Activated CD8-positive, alpha-beta T cell treated with anti-CD3 and anti-CD28 coated beads, Interleukin-2, amount 10 ng/mL, durations not matched to agents 7 days and 5 days (primary cell): ENCODE measurements at regions of chr7 and their contacts with region 1.

Region 1: DNA sequence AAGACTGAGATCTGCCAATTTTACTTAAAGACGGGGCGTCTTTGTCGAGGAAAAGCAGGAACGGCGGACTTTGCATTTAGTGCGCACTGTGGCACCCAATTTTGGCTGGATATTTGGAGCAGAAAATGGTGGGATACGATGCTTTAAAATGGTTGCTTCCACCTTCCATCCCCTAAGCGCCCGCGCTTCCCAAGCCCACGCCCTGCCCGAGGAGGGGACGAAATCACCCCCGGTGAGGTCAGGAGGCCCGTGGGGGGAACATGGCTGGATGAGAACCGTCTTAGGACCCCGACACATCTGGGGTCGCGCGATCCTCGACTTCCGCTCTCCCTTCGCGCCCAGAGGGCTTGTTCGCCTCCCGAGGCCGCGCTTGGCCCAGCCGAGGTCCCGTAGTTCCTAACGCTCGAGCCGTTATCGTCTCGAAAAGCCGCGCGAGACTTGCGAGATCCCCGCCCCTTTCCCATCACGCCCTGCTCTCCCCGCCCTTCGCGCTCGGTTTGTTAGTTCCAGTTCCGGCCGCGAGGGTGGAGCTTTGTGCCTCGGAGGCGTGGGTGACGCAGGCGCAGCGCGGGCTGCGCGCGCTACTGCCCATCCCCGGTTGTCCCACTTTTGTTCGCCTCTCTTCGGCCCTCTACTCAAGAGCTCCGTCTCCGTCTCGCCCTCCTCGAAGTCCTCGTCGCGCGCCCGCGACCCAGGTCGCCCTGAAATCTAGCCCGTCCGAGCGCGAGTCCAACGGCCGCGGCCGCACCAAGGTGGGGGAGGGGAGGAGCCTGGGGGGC is at the start of gene SRRT:
- DNase-seq: peak; percentile 99
- ATAC-seq: peak; percentile 93
- H3K4me3 Mint-ChIP-seq: peak within 1 kb of the TSS; percentile 99
- H3K27ac Mint-ChIP-seq: peak within 1 kb of the TSS; percentile 99
- H3K4me1 Mint-ChIP-seq: peaks cover 55% of the 10 kb centered on the region
- H3K27me3 Mint-ChIP-seq: no peaks in the 10 kb centered on the region
- total RNA-seq, gene SRRT: 273 to 292 TPM

Region 2: GRCh38 chr7:100675581-100676350 is 199.0 kb before region 1 on chr7:
- CTCF ChIA-PET with region 1: no interaction called
- POLR2A ChIA-PET with region 1: no interaction called
- DNase-seq: peak; percentile 94
- ATAC-seq: peak; percentile 64
- H3K4me3 Mint-ChIP-seq: peak overlapping the region; percentile 91
- H3K27ac Mint-ChIP-seq: peak overlapping the region; percentile 89
- H3K4me1 Mint-ChIP-seq: peaks cover 37% of the 10 kb centered on the region
- H3K27me3 Mint-ChIP-seq: peaks cover 6% of the 10 kb centered on the region

Region 3: GRCh38 chr7:100825830-100826513 is 48.8 kb before region 1 on chr7:
- CTCF ChIA-PET with region 1: no interaction called
- POLR2A ChIA-PET with region 1: no interaction called
- DNase-seq: no peak
- ATAC-seq: no peak
- H3K4me3 Mint-ChIP-seq: no peak overlapping the region
- H3K27ac Mint-ChIP-seq: no peak overlapping the region
- H3K4me1 Mint-ChIP-seq: peaks cover 25% of the 10 kb centered on the region
- H3K27me3 Mint-ChIP-seq: peaks cover 39% of the 10 kb centered on the region

Region 4: GRCh38 chr7:100889761-100890634 is 15.2 kb after region 1 on chr7:
- CTCF ChIA-PET with region 1: interaction called, 15 read pairs
- POLR2A ChIA-PET with region 1: interaction called, 115 read pairs
- DNase-seq: peak; percentile 93
- ATAC-seq: peak; percentile 92
- H3K4me3 Mint-ChIP-seq: peak overlapping the region; percentile 82
- H3K27ac Mint-ChIP-seq: peak overlapping the region; percentile 77
- H3K4me1 Mint-ChIP-seq: peaks cover 46% of the 10 kb centered on the region
- H3K27me3 Mint-ChIP-seq: peaks cover 22% of the 10 kb centered on the region

Region 5: GRCh38 chr7:101085162-101085987 is 210.6 kb after region 1 on chr7 and contains the start of gene TRIM56:
- CTCF ChIA-PET with region 1: no interaction called
- POLR2A ChIA-PET with region 1: interaction called, 12 read pairs
- DNase-seq: peak; percentile 90
- ATAC-seq: peak; percentile 94
- H3K4me3 Mint-ChIP-seq: peak within 1 kb of the TSS; percentile 98
- H3K27ac Mint-ChIP-seq: peak within 1 kb of the TSS; percentile 100
- H3K4me1 Mint-ChIP-seq: peaks cover 35% of the 10 kb centered on the region
- H3K27me3 Mint-ChIP-seq: peaks cover 4% of the 10 kb centered on the region
- total RNA-seq, gene TRIM56: 66.8 to 67.9 TPM